ENCODE measurements at regions of chr4 and their contacts with region 1.

Region 1: DNA sequence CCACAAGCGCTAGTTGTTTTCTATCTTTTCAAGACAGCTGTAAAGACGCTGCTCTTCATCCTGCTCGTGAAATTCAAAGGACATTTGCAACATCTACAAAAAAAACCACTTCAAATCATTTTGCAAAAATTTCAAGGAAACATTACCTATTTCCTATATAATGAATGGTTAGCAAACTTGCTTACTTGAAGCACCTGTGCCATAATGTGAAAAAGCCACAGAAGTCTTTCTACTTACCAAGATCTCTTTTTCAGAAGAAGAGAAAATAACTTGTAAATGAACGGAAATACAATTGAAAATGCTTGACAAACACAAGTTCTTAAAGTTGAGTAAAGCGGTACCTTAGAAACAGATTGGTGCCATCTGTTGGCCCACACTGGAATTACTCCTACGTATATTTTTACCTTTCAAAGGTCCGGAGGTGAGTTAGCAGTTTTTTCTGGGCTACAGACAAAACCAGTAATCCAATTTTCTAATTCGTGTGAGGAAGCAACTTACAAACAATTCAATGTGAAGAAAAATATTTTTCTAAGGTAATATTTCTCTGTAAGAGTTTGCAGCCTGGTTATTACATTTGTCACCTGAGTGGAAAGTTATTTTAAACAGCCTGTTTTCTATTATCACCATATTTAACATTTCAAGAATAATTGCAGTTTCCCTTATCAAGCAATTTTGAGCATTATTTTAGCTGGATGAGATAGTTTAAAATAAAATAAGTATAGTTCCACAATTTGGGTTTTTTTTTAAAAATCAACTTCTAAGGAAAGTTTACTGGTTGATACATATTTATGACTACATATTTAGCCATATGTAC is at the start of gene TLR6:
- DNase-seq: peak; percentile 65
- H3K4me3 Mint-ChIP-seq: peak within 1 kb of the TSS; percentile 88
- H3K27ac Mint-ChIP-seq: peak within 1 kb of the TSS; percentile 88
- H3K4me1 Mint-ChIP-seq: peaks cover 50% of the 10 kb centered on the region
- H3K27me3 Mint-ChIP-seq: no peaks in the 10 kb centered on the region
- total RNA-seq, gene TLR6: 1.3 and 1.7 TPM in 2 replicates

Region 2: GRCh38 chr4:37891260-37892159 is 965.2 kb before region 1 on chr4:
- intact Hi-C with region 1: loop called (anchors 5 kb)
- DNase-seq: peak; percentile 53
- H3K4me3 Mint-ChIP-seq: peak overlapping the region; percentile 93
- H3K27ac Mint-ChIP-seq: peak overlapping the region; percentile 95
- H3K4me1 Mint-ChIP-seq: peaks cover 48% of the 10 kb centered on the region
- H3K27me3 Mint-ChIP-seq: peaks cover 19% of the 10 kb centered on the region

Region 3: GRCh38 chr4:38160487-38161207 is 696.1 kb before region 1 on chr4:
- intact Hi-C with region 1: loop called (anchors 5 kb)
- DNase-seq: peak; percentile 66
- H3K4me3 Mint-ChIP-seq: peak overlapping the region; percentile 51
- H3K27ac Mint-ChIP-seq: peak overlapping the region; percentile 90
- H3K4me1 Mint-ChIP-seq: peaks cover 80% of the 10 kb centered on the region
- H3K27me3 Mint-ChIP-seq: peaks cover 7% of the 10 kb centered on the region

Region 4: GRCh38 chr4:38663801-38664705 is 192.7 kb before region 1 on chr4 and contains the start of gene KLF3:
- intact Hi-C with region 1: loop called (anchors 5 kb)
- DNase-seq: peak; percentile 86
- H3K4me3 Mint-ChIP-seq: peak within 1 kb of the TSS; percentile 85
- H3K27ac Mint-ChIP-seq: peak within 1 kb of the TSS; percentile 53
- H3K4me1 Mint-ChIP-seq: peaks cover 55% of the 10 kb centered on the region
- H3K27me3 Mint-ChIP-seq: peaks cover 24% of the 10 kb centered on the region
- total RNA-seq, gene KLF3: 1.8 and 1.9 TPM in 2 replicates

Region 5: DNA sequence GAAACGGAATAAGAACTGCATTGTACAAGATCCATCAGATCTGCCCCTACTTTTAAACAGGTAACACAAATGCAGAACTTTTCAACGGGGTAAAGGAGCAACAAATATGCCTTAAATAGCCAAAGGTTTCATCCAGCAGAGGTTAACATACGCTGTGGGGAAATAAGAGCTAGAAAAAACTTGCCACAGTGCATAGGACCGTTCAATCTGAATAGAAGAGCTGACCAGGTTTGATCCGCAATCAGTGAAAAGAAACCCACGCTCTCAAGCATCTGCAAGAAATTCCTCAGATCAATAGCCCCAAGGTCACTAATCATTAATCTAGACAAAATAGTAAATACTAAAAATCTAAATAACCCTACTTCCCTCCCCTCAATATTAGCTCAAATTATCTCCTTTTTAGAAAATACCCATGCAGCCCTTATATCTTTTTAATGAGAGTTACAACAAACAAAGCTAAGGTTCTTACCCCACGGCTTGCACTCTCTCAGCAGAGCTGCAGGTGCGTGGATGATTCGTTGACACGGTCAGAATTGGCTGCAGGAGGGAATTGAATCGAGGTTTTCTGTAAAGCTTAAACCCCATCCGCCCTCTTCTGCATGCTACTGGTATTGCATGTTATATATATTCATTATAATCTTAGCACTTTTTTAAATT is 74.2 kb before region 1 on chr4 and contains the start of gene TLR10:
- intact Hi-C with region 1: loop called (anchors 1 kb)
- DNase-seq: no peak
- H3K4me3 Mint-ChIP-seq: no peak within 1 kb of the TSS
- H3K27ac Mint-ChIP-seq: no peak within 1 kb of the TSS
- H3K4me1 Mint-ChIP-seq: peaks cover 11% of the 10 kb centered on the region
- H3K27me3 Mint-ChIP-seq: peaks cover 1% of the 10 kb centered on the region
- total RNA-seq, gene TLR10: not detected in 2 replicates

Region 6: GRCh38 chr4:38867478-38868058 is 10.8 kb after region 1 on chr4 and contains the start of gene FAM114A1:
- intact Hi-C with region 1: loop called (anchors 1 kb)
- DNase-seq: peak; percentile 43
- H3K4me3 Mint-ChIP-seq: peak within 1 kb of the TSS; percentile 80
- H3K27ac Mint-ChIP-seq: no peak within 1 kb of the TSS
- H3K4me1 Mint-ChIP-seq: peaks cover 13% of the 10 kb centered on the region
- H3K27me3 Mint-ChIP-seq: peaks cover 3% of the 10 kb centered on the region
- total RNA-seq, gene FAM114A1: 0.22 and 0.49 TPM in 2 replicates

Region 7: GRCh38 chr4:38914854-38915253 is 58.1 kb after region 1 on chr4:
- intact Hi-C with region 1: no loop called
- DNase-seq: peak; percentile 7
- H3K4me3 Mint-ChIP-seq: peak overlapping the region; percentile 25
- H3K27ac Mint-ChIP-seq: peak overlapping the region; percentile 82
- H3K4me1 Mint-ChIP-seq: peaks cover 10% of the 10 kb centered on the region
- H3K27me3 Mint-ChIP-seq: no peaks in the 10 kb centered on the region

Region 8: DNA sequence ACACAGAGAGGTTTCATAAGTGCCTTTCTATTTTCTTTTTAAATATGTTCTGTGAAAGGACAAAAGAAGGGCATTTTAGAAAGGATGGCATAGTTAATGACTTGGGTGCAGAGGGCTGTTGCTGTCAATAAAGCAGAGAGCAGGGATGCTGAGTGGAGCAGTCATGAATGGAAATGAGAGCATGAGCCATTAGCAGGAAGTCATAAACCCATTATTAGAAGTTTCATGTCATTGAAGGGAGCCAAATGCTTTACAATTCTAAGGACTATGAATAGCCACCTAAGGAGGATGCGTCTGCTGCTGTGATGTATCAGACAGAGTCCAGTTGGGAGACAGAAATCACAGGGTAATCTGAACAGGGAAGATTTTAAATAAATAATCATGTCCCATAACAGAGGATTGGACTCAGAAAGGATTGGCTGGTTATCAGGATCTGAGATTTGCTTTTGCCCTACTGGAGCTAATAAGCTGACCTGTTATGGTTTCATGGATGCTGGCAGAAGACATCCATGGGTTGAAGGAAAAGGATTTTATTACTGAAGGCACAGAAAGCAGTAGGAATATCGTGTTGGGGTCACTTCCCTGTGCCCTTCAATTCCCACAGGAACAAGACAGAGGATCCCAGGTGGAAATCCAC is 278.1 kb after region 1 on chr4:
- intact Hi-C with region 1: loop called (anchors 1 kb)
- DNase-seq: no peak
- H3K4me3 Mint-ChIP-seq: no peak overlapping the region
- H3K27ac Mint-ChIP-seq: no peak overlapping the region
- H3K4me1 Mint-ChIP-seq: peaks cover 19% of the 10 kb centered on the region
- H3K27me3 Mint-ChIP-seq: no peaks in the 10 kb centered on the region